Psoas muscle (tissue), 8 donors: ENCODE measurements at regions of chr3 and their contacts with region 1.

Region 1: DNA sequence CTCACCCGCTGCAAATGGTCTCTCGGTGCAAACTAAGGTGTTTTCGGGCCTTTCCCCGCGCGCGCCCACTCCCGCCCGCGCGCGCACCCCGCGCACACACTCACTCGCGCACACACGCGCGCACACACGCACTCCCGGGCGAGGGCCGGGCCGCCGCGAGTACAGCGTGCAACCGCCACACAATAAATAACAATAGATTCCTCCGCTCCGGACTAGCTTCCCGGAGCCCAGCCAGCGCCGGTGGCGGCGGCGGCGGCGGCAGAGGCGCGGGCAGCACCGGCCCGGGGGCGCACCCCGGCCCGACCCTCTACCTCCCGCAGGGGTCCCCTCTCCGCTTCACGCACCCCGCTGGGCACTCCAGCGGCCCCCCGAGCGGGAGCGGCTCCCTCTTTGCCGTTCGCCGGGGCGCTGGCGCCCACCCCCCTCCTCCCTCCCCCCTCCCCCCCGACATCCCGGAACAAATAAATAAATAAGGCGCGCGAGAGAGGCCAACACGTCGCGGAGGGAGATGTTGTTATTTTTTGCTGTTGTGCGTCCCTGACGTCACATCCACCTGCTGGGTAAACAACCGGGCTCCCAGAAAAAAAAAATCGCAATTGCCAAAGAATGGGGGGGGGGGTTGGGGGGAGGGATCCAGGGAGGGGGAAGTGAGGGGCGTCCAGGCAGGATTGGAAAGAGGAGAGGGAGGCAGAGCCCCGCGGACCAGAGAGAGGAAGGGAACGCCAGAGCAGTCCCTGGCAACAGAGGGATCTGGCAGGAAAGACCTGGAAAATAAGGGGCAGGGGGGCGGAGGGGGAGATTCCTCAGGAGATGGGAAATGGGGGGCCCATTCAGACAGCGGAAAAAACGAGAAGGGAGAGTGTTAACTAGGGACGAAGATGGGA is at the start of gene FOXP1:
- DNase-seq: peak; percentile 78 to 88
- ATAC-seq: peak; percentile 79 to 86 (median 82)
- H3K4me3 ChIP-seq: peak within 1 kb of the TSS; percentile 95
- H3K27ac ChIP-seq: peak within 1 kb of the TSS; percentile 93
- H3K4me1 ChIP-seq: peaks cover 26% of the 10 kb centered on the region
- H3K27me3 ChIP-seq: no peaks in the 10 kb centered on the region
- CTCF ChIP-seq: no peak
- total RNA-seq, gene FOXP1: 15.4 to 26.4 (median 19.6) TPM

Region 2: GRCh38 chr3:70539908-70540307 is 1043.9 kb before region 1 on chr3:
- intact Hi-C with region 1: loop called in 1 of 2 experiments (anchors 10 kb)
- DNase-seq: no peak
- ATAC-seq: no peak
- H3K4me3 ChIP-seq: no peak overlapping the region
- H3K27ac ChIP-seq: no peak overlapping the region
- H3K4me1 ChIP-seq: no peaks in the 10 kb centered on the region
- H3K27me3 ChIP-seq: peaks cover 0 to 3% (median 0%) of the 10 kb centered on the region in 3 donors
- CTCF ChIP-seq: no peak

Region 3: DNA sequence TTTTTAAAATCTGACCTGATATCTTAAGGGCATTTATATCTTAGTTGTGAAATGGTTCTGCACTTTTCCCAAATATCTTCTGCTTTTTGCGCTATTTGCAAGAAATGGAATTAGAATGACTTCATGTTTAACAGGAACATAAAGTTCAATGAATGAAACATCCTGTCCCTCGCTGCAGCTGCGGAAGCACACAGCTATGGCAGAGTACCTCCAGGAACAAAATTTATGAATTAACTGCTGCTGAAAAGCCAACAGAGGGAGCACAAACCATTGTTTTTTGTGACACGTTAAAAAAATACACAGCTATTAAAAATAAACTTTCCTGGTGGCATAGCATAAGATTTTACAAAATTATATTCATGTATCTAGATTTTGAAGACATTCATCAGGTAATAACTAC is 867.0 kb before region 1 on chr3:
- intact Hi-C with region 1: loop called in 1 of 2 experiments (anchors 5 kb)
- DNase-seq: peak in 1 of 2 donors; percentile 52
- ATAC-seq: no peak
- H3K4me3 ChIP-seq: no peak overlapping the region
- H3K27ac ChIP-seq: no peak overlapping the region
- H3K4me1 ChIP-seq: no peaks in the 10 kb centered on the region
- H3K27me3 ChIP-seq: no peaks in the 10 kb centered on the region
- CTCF ChIP-seq: peak; percentile 32

Region 4: GRCh38 chr3:71064288-71064955 is 519.4 kb before region 1 on chr3:
- intact Hi-C with region 1: loop called in 1 of 2 experiments (anchors 2 kb)
- DNase-seq: peak; percentile 55 to 70
- ATAC-seq: peak; percentile 46 to 63 (median 56)
- H3K4me3 ChIP-seq: peak overlapping the region; percentile 71
- H3K27ac ChIP-seq: peak overlapping the region; percentile 96
- H3K4me1 ChIP-seq: peaks cover 54% of the 10 kb centered on the region
- H3K27me3 ChIP-seq: no peaks in the 10 kb centered on the region
- CTCF ChIP-seq: peak; percentile 17

Region 5: GRCh38 chr3:71305231-71306206 is 278.3 kb before region 1 on chr3:
- intact Hi-C with region 1: loop called (anchors 2 to 10 kb)
- DNase-seq: peak; percentile 20 to 64
- ATAC-seq: peak; percentile 93 to 98 (median 96)
- H3K4me3 ChIP-seq: peak overlapping the region; percentile 60
- H3K27ac ChIP-seq: peak overlapping the region; percentile 81
- H3K4me1 ChIP-seq: peaks cover 19% of the 10 kb centered on the region
- H3K27me3 ChIP-seq: no peaks in the 10 kb centered on the region
- CTCF ChIP-seq: no peak

Region 6: GRCh38 chr3:71447803-71448202 is 136.0 kb before region 1 on chr3:
- intact Hi-C with region 1: loop called in 1 of 2 experiments (anchors 5 kb)
- DNase-seq: no peak
- ATAC-seq: peak in 3 of 4 donors; percentile 27 to 54 (median 50)
- H3K4me3 ChIP-seq: no peak overlapping the region
- H3K27ac ChIP-seq: peak overlapping the region; percentile 39
- H3K4me1 ChIP-seq: peaks cover 28% of the 10 kb centered on the region
- H3K27me3 ChIP-seq: no peaks in the 10 kb centered on the region
- CTCF ChIP-seq: no peak

Region 7: DNA sequence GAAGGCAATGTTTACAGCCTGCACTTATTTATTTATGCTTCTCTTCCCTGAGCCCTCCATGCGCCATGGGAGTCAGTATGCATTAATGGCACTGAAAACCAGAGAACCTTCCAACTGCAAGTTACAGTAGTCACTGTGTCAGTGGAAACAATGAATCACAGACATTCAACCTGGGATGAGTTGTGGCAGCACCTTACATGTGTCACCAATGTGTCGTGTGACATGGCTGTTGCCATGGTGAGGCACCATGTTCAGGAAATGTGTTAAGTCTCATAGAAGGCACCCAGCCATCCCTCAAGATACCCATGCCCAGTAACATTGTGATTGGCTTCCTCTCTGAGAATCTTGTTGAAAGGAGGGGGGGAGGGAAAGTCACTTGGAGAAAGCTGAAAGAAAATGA is 105.2 kb before region 1 on chr3:
- intact Hi-C with region 1: no loop called
- DNase-seq: no peak
- ATAC-seq: peak in 1 of 4 donors; percentile 42
- H3K4me3 ChIP-seq: no peak overlapping the region
- H3K27ac ChIP-seq: no peak overlapping the region
- H3K4me1 ChIP-seq: no peaks in the 10 kb centered on the region
- H3K27me3 ChIP-seq: no peaks in the 10 kb centered on the region
- CTCF ChIP-seq: no peak

Region 8: GRCh38 chr3:71641674-71642073 is 57.9 kb after region 1 on chr3:
- intact Hi-C with region 1: no loop called
- DNase-seq: no peak
- ATAC-seq: no peak
- H3K4me3 ChIP-seq: no peak overlapping the region
- H3K27ac ChIP-seq: no peak overlapping the region
- H3K4me1 ChIP-seq: no peaks in the 10 kb centered on the region
- H3K27me3 ChIP-seq: no peaks in the 10 kb centered on the region
- CTCF ChIP-seq: no peak

Region 9: DNA sequence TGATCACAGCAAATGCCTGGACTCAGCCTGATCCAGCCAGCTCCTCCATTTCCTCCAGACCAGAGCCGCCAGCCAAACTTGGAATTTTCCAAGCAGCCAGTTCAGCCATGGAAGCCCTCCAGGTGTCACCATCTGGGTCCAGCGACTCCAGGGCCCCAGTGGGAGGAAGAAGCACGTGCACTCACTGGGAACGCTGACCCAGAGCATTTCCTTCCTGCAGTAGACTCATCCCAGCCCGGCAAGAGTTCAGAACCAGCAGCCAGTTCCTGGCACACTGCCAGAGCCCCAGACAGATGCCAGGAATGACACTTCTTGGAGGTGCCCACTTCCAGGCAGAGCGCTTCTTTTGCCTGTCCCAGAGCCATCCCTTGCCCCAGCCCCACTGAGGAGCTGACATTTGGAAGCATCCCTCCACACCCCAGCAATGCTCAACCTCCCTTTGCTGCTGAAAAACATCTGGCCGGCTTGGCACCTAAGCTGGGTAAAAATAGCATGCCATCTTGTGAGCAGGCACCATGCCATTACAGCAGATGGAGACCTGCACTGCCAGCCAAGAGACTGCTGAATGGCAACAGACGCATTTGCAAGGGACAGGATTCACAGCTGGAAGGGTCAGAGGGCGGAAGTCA is 661.5 kb after region 1 on chr3:
- intact Hi-C with region 1: no loop called
- DNase-seq: peak; percentile 60 to 77
- ATAC-seq: peak; percentile 81 to 93 (median 87)
- H3K4me3 ChIP-seq: no peak overlapping the region
- H3K27ac ChIP-seq: no peak overlapping the region
- H3K4me1 ChIP-seq: peaks cover 14% of the 10 kb centered on the region
- H3K27me3 ChIP-seq: no peaks in the 10 kb centered on the region
- CTCF ChIP-seq: no peak